ENCODE measurements at regions of chr15 and their contacts with region 1.

Region 1: DNA sequence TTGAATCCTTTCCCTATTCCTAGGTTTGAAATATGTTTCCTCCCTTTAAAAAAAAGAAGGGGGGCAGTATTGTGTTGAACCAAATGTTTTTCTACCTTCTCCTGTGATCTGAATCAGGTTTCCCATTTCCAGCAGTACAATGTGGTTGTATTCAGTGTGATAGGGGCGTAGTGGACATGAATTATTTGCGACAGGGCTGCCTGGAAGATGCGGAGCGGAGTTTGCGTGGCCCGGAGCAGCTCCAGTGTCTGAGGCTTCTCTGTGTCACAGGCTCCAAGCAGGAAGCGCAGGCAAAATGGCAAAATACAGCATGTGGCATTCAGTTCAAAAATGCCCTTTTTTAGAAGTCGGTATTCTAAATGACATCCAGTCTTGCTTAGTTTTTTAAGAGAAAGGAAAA is 154.4 kb downstream of the PGPEP1L start:
- DNase-seq: peak; percentile 93
- ATAC-seq: peak; percentile 47
- H3K4me3 ChIP-seq: peak overlapping the region; percentile 61
- H3K27ac ChIP-seq: peak overlapping the region; percentile 70; the same call in 1 of the 2 replicates
- H3K4me1 ChIP-seq: peaks cover 40% of the 10 kb centered on the region
- H3K27me3 ChIP-seq: no peaks in the 10 kb centered on the region
- CTCF ChIP-seq: 0 out of 2 replicates have a peak, but pooled peaks have one; percentile 6
- POLR2A ChIP-seq: no peak; the same call in 1 of the 2 replicates
- RAD21 ChIP-seq: peak; percentile 39; the same call in 1 of the 2 replicates

Region 2: GRCh38 chr15:98876451-98877398 is 23.6 kb after region 1 on chr15:
- CTCF ChIA-PET with region 1: interaction called, 3 read pairs
- POLR2A ChIA-PET with region 1: no interaction called
- dilution Hi-C with region 1: no loop called
- in situ Hi-C with region 1: no loop called
- intact Hi-C with region 1: loop called (anchors 2 kb)
- DNase-seq: peak; percentile 49
- ATAC-seq: no peak
- H3K4me3 ChIP-seq: no peak overlapping the region
- H3K27ac ChIP-seq: no peak overlapping the region
- H3K4me1 ChIP-seq: peaks cover 36% of the 10 kb centered on the region
- H3K27me3 ChIP-seq: no peaks in the 10 kb centered on the region
- CTCF ChIP-seq: no peak
- POLR2A ChIP-seq: no peak
- RAD21 ChIP-seq: no peak

Region 3: DNA sequence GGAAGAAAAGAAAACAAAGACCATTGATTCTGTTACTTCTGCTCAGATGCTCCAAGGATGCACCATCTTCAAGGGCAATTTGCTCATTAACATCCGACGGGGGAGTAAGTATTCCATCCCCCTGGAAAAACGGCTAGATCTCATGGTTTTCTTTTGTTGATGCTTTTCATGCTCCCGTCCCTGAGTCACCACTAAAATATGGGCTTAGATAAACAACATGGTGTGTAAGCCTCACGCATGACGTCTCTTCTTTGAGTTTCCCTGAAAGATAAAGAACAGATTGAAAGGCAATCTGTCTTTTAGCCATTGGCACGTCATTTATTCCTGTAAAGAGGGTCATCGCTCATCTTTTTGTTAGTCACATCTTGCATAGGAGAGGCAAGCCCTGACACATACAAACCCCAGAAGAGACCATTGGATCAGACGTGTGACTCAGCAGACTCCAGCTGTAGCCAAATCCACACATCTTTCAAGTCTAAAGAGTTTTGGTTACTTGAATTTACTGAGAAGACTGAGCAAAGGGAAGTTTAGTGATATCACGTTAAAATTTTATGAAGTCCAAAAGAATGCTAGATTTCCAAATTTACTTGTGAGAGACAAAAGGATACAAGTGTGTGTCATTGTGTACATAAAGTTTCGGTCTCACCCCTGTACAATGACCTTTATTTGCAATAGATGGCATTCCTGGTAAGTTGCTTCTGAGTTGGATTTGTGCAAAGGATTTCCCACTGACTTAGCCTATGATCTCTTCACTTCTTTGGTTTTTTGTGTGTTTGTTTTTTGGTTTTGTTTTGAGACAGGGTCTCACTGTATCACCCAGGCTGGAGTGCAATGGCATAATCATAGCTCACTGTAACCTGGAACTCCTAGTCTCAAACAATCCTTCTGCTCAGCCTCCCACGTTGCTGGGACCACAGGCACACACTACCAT is 43.9 kb after region 1 on chr15:
- CTCF ChIA-PET with region 1: interaction called, 3 read pairs
- POLR2A ChIA-PET with region 1: no interaction called
- dilution Hi-C with region 1: no loop called
- in situ Hi-C with region 1: no loop called
- intact Hi-C with region 1: loop called (anchors 2 kb)
- DNase-seq: peak; percentile 100
- ATAC-seq: peak; percentile 76
- H3K4me3 ChIP-seq: no peak overlapping the region; the same call in 1 of the 2 replicates
- H3K27ac ChIP-seq: peak overlapping the region; percentile 98
- H3K4me1 ChIP-seq: peaks cover 48% of the 10 kb centered on the region
- H3K27me3 ChIP-seq: no peaks in the 10 kb centered on the region
- CTCF ChIP-seq: no peak
- POLR2A ChIP-seq: peak; percentile 52
- RAD21 ChIP-seq: peak; percentile 30; the same call in 1 of the 2 replicates

Measured in IMR-90 (cell line).